Caco-2 (cell line): ENCODE measurements at regions of chrX and their contacts with region 1.

Region 1: GRCh38 chrX:76279000-76279399 is 106.1 kb downstream of the PBDC1 start:
- DNase-seq: peak; percentile 44 to 50
- H3K4me3 ChIP-seq: no peak overlapping the region
- H3K4me3 Mint-ChIP-seq: no peak overlapping the region
- H3K27ac Mint-ChIP-seq: no peak overlapping the region
- H3K4me1 ChIP-seq: no peaks in the 10 kb centered on the region
- H3K4me1 Mint-ChIP-seq: no peaks in the 10 kb centered on the region
- H3K27me3 ChIP-seq: no peaks in the 10 kb centered on the region
- H3K27me3 Mint-ChIP-seq: no peaks in the 10 kb centered on the region
- CTCF ChIP-seq: peak; percentile 41 to 63

Region 2: GRCh38 chrX:76420237-76420636 is 141.2 kb after region 1 on chrX:
- CTCF ChIA-PET with region 1: no interaction called
- POLR2A ChIA-PET with region 1: no interaction called
- intact Hi-C with region 1: loop called (anchors 1 kb)
- DNase-seq: peak in 1 of 2 experiments; percentile 2
- H3K4me3 ChIP-seq: no peak overlapping the region
- H3K4me3 Mint-ChIP-seq: no peak overlapping the region
- H3K27ac Mint-ChIP-seq: no peak overlapping the region
- H3K4me1 ChIP-seq: no peaks in the 10 kb centered on the region
- H3K4me1 Mint-ChIP-seq: no peaks in the 10 kb centered on the region
- H3K27me3 ChIP-seq: no peaks in the 10 kb centered on the region
- H3K27me3 Mint-ChIP-seq: peaks cover 4% of the 10 kb centered on the region
- CTCF ChIP-seq: peak in 1 of 2 experiments; percentile 7

Region 3: DNA sequence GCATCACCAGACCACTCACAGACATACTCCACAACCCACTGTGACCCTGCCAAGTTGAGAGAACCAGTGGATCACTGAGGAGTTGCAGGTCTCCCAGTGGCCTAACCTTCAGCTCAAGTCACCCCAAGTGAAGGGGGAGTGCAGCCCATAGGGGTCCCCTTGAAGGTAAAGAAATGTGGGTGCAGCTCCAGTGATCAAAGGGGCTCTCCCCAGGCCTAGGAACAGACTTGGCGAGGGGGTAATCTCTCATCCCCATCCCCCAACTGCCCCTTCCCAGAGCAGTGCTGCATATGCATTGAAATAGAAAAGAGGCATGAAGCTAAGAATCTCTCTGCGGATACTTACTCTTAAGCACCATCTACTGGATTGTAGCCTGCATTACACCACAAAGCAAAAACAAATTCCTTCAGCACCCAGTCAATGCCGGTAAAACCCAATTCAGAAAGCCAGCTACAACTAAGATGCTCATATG is 175.5 kb after region 1 on chrX:
- CTCF ChIA-PET with region 1: interaction called, 25 read pairs
- POLR2A ChIA-PET with region 1: no interaction called
- intact Hi-C with region 1: loop called (anchors 1 kb)
- DNase-seq: peak in 1 of 2 experiments; percentile 8
- H3K4me3 ChIP-seq: no peak overlapping the region
- H3K4me3 Mint-ChIP-seq: no peak overlapping the region
- H3K27ac Mint-ChIP-seq: no peak overlapping the region
- H3K4me1 ChIP-seq: no peaks in the 10 kb centered on the region
- H3K4me1 Mint-ChIP-seq: no peaks in the 10 kb centered on the region
- H3K27me3 ChIP-seq: no peaks in the 10 kb centered on the region
- H3K27me3 Mint-ChIP-seq: no peaks in the 10 kb centered on the region
- CTCF ChIP-seq: peak; percentile 23 to 48

Region 4: GRCh38 chrX:76477353-76477752 is 198.4 kb after region 1 on chrX:
- CTCF ChIA-PET with region 1: no interaction called
- POLR2A ChIA-PET with region 1: no interaction called
- intact Hi-C with region 1: no loop called
- DNase-seq: no peak
- H3K4me3 ChIP-seq: no peak overlapping the region
- H3K4me3 Mint-ChIP-seq: no peak overlapping the region
- H3K27ac Mint-ChIP-seq: no peak overlapping the region
- H3K4me1 ChIP-seq: no peaks in the 10 kb centered on the region
- H3K4me1 Mint-ChIP-seq: no peaks in the 10 kb centered on the region
- H3K27me3 ChIP-seq: no peaks in the 10 kb centered on the region
- H3K27me3 Mint-ChIP-seq: no peaks in the 10 kb centered on the region
- CTCF ChIP-seq: no peak